Ovary (tissue), 10 donors: ENCODE measurements at regions of chr14 and their contacts with region 1.

Region 1: DNA sequence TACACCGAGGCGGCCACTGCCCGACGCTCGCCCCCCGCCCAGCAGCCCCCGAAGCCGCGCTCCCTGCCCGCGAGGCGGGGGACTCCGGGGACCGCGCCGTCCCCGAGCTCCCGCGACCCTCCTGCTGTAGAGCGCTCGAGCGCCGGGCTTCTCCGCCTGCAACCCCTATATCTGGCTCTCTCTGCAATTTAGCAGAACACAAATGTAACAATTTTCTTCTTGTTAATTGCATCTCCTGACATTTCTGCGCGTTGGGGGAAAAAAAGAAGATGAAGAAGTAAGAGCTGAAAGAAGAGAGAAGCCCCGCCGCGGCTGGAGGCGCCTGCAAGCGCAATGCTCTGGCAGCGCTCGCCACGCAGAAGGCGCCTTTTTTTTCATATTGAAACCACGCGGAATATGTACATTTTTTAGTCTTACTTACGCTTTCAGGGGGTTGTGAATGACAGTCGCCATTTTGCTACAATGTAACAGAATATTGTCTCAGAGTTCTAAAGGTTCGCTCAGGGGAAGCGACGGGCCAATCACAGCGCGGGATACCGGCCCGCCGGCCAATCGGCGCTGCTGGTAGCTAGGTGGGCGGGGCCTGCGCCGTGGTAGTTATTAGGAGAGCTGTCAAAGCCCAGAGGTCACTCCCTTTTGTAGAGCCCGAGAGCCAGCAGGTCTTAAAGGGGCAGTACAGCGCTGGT is at the start of gene DPF3:
- DNase-seq: peak; percentile 93 to 96 (median 95)
- H3K4me3 ChIP-seq: peak within 1 kb of the TSS; percentile 53
- H3K27ac ChIP-seq: peak within 1 kb of the TSS; percentile 65 to 74
- H3K4me1 ChIP-seq: peaks cover 6% of the 10 kb centered on the region
- H3K27me3 ChIP-seq: no peaks in the 10 kb centered on the region
- CTCF ChIP-seq: no peak
- EP300 ChIP-seq: no peak
- POLR2A ChIP-seq: no peak
- total RNA-seq, gene DPF3: 8.0 to 34.4 (median 23.0) TPM

Region 2: DNA sequence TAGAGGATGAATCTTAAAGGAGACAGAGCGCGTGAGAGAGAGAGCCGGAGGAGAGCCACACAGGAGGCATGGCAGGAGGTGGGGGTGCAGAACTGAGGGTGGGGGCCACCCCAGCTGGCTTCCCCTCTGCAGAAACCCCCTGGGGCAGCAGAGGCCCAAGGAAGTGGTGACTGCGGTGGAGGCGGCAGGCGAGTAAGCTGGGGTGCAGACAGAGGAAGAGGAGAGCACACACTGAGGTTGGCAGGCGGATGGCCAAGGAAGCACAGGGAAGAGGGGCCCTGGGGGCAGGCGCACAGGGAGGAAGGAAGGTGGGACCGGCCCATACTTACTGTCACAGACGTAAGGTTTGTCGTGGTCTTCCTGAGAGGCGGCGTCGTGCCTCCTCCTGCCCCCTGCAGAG is 179.7 kb before region 1 on chr14:
- intact Hi-C with region 1: loop called in 1 of 4 experiments (anchors 10 kb)
- DNase-seq: no peak
- H3K4me3 ChIP-seq: no peak overlapping the region
- H3K27ac ChIP-seq: no peak overlapping the region
- H3K4me1 ChIP-seq: peaks cover 24% of the 10 kb centered on the region
- H3K27me3 ChIP-seq: no peaks in the 10 kb centered on the region
- CTCF ChIP-seq: no peak
- EP300 ChIP-seq: no peak
- POLR2A ChIP-seq: no peak

Region 3: DNA sequence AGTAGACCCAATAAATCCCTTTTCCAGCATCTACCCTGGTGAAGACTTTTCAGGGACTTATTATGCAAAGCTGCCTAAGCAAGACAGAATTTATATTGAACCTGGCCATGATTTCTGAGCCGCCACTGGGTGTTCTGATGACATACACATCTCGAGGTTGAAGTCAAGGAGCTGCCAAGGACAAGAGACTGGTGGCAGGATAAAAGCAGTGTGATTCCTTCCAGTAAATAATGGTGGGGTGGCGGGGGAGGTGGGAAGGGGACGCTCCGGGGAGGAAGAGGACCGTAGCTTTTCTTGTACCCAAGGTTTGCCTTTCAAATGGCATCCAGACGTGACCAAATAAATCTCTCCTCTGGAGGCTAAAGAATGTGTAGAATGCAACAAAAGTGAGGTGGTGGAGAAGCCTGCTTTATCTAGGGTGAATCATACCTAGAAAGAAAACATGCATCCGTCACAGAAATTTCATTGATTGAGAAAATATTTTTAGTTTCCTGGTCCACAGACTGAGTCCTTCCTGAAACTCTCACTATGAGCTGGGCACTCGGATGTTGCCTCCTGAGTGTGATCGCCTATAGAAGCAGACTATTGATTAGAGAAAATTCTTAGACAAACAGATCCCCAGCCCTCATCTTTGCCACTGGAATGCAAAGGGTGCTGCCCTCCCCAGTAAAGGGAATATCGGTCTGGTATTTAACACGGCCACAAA is 112.2 kb before region 1 on chr14:
- intact Hi-C with region 1: loop called in 1 of 4 experiments (anchors 10 kb)
- DNase-seq: no peak
- H3K4me3 ChIP-seq: no peak overlapping the region
- H3K27ac ChIP-seq: no peak overlapping the region
- H3K4me1 ChIP-seq: peaks cover 5% of the 10 kb centered on the region
- H3K27me3 ChIP-seq: no peaks in the 10 kb centered on the region
- CTCF ChIP-seq: no peak
- EP300 ChIP-seq: no peak
- POLR2A ChIP-seq: no peak

Region 4: GRCh38 chr14:72942782-72943333 is 49.1 kb after region 1 on chr14:
- intact Hi-C with region 1: no loop called
- DNase-seq: no peak
- H3K4me3 ChIP-seq: no peak overlapping the region
- H3K27ac ChIP-seq: no peak overlapping the region
- H3K4me1 ChIP-seq: peaks cover 4% of the 10 kb centered on the region
- H3K27me3 ChIP-seq: no peaks in the 10 kb centered on the region
- CTCF ChIP-seq: no peak
- EP300 ChIP-seq: no peak
- POLR2A ChIP-seq: no peak

Region 5: DNA sequence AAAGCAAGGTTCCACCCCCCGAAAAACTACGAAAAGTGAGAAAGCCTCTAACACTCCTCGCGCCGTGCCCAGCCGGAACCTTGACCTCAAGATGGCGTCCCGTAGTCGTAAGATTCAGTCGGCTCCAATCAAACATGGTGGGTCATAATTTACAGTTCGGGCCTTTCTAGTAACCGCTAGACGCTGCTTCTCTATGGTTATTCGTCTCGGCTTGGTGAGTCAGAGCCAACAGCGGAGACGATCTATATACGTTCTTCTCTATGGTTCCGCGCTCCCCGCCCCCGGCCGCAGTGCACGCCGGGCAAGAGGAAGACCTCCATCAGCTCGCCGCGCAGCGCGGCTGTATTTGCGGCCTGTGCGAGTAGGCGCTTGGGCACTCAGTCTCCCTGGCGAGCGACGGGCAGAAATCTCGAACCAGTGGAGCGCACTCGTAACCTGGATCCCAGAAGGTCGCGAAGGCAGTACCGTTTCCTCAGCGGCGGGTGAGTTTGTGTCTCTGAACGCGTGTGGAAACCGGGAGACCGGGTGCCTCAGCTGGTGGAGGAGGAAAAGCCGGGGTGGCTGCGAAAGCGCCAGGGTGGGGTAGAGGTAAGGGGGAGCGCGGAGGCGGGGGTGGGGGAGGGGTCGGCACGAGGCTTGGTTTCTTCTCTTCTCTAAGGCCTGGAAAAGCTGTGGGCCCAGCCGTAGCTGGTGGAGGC is 164.6 kb after region 1 on chr14 and contains the start of gene RBM25:
- intact Hi-C with region 1: no loop called
- DNase-seq: peak; percentile 92 to 96 (median 95)
- H3K4me3 ChIP-seq: peak within 1 kb of the TSS; percentile 71
- H3K27ac ChIP-seq: peak within 1 kb of the TSS; percentile 75 to 87
- H3K4me1 ChIP-seq: peaks cover 5% of the 10 kb centered on the region
- H3K27me3 ChIP-seq: no peaks in the 10 kb centered on the region
- CTCF ChIP-seq: peak in 1 of 3 donors; percentile 13
- EP300 ChIP-seq: no peak
- POLR2A ChIP-seq: peak; percentile 95
- total RNA-seq, gene RBM25: 38.6 to 81.0 (median 61.1) TPM